Head of caudate nucleus (tissue), 42 donors: ENCODE measurements at regions of chr14 and their contacts with region 1.

Region 1: DNA sequence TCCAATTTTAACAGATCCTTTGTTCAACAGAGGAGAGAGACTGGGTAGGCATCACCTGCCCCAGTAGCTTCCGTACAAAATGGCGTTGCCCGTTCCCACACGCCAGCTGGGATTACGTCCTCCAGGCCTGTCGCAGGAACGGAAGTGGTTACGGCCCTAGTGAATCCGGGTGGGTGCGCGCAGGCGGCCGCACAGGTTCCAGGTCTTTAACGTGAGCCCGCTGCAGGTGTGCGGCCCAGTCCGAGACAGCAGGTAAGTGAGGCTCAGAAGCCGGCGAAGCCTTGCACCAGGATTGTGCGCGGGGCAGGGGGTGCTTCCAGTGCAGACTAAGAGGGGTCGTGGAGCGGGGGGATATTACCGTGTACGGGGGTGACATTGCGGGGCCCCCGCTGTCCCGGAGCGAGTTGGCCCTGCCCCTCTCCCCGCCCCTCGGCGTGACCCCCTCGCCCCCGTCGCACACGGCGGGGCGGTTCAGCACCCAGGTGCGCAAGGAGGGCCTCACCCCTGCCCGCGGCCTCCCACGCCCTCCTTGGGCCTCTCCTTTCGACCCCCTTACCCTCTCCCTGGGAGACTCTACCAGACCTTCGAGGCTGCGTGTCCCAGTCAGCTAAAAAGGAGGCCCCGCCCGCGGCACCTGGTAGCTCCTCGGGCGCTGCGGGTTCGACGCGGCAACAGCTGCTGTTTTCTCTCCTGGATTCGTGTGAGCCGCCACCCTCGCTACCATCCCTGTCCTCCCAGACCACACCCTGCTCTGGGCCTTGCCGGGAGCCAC is at the start of gene EXD2:
- DNase-seq: peak; percentile 83 to 98 (median 92)

Region 2: GRCh38 chr14:69090187-69090789 is 101.2 kb before region 1 on chr14:
- intact Hi-C with region 1: no loop called
- DNase-seq: peak in 24 of 42 donors; percentile 21 to 74 (median 44)

Region 3: GRCh38 chr14:69153131-69153872 is 38.2 kb before region 1 on chr14:
- intact Hi-C with region 1: loop called (anchors 5 kb)
- DNase-seq: peak; percentile 74 to 97 (median 91)

Region 4: GRCh38 chr14:69299286-69300035 is 107.9 kb after region 1 on chr14:
- intact Hi-C with region 1: no loop called
- DNase-seq: peak in 1 of 42 donors; percentile 23